HepG2 (cell line): ENCODE measurements at regions of chr7 and their contacts with region 1.

Region 1: DNA sequence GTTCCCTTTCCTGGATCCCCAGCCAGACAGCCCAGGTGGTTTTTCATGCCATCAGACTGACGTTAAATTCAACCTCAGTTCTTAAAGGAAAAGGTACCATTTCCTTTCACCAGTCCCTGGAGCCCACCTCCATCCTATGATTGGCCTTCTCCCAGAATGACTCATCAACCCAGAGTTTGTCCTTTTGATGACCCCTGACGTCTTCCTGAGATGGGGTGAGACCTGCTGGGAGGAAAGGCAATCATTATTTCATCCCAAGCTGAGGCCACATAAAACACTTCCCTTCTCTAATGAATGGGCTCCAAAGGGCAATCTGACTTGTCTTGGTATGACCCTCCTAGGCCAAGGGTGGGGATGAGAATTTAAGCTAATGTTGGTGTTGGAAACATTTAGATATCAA is 750.7 kb downstream of the SUGCT start:
- DNase-seq: no peak
- ATAC-seq: no peak
- H3K4me3 ChIP-seq: no peak overlapping the region
- H3K27ac ChIP-seq: no peak overlapping the region
- H3K4me1 ChIP-seq: no peaks in the 10 kb centered on the region
- H3K27me3 ChIP-seq: no peaks in the 10 kb centered on the region
- CTCF ChIP-seq: no peak
- EP300 ChIP-seq: no peak
- POLR2A ChIP-seq: no peak
- RAD21 ChIP-seq: no peak

Region 2: DNA sequence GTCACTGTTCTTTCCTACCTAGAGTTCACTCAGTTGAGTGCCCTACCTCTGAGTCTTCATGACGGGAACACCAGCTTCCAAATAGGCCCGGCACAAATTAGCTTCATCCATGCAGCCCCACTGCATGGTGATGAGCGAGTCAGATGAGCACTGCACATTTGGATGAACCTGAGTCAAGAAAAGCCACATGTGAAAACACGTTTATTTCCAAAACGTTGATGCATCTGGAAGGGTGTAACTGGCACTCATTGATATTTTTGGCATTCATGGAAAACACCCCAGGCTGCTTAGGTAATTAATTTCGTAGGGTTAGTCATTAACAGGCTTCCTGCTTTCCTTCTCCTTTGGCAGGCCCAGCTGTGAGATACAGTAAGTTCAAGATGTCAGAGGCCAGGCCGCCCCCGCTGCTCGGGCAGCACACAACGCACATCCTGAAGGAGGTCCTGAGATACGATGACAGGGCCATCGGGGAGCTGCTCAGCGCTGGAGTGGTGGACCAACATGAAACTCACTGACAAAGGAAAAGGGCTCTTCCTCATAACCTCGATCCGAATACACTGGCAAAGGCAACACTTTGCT is 25.4 kb before region 1 on chr7:
- CTCF ChIA-PET with region 1: no interaction called
- POLR2A ChIA-PET with region 1: no interaction called
- in situ Hi-C with region 1: no loop called
- intact Hi-C with region 1: no loop called
- DNase-seq: no peak
- ATAC-seq: no peak
- H3K4me3 ChIP-seq: no peak overlapping the region
- H3K27ac ChIP-seq: no peak overlapping the region
- H3K4me1 ChIP-seq: 0 out of 2 replicates have a peak, but pooled peaks cover 11% of the 10 kb centered on the region
- H3K27me3 ChIP-seq: no peaks in the 10 kb centered on the region
- CTCF ChIP-seq: no peak
- EP300 ChIP-seq: no peak
- POLR2A ChIP-seq: no peak
- RAD21 ChIP-seq: no peak

Region 3: GRCh38 chr7:40909346-40910005 is 24.0 kb after region 1 on chr7:
- CTCF ChIA-PET with region 1: no interaction called
- POLR2A ChIA-PET with region 1: no interaction called
- in situ Hi-C with region 1: no loop called
- intact Hi-C with region 1: loop called (anchors 1 kb)
- DNase-seq: no peak
- ATAC-seq: no peak
- H3K4me3 ChIP-seq: no peak overlapping the region
- H3K27ac ChIP-seq: no peak overlapping the region
- H3K4me1 ChIP-seq: no peaks in the 10 kb centered on the region
- H3K27me3 ChIP-seq: no peaks in the 10 kb centered on the region
- CTCF ChIP-seq: no peak
- EP300 ChIP-seq: no peak
- POLR2A ChIP-seq: no peak
- RAD21 ChIP-seq: no peak

Region 4: GRCh38 chr7:41881331-41882130 is 996.0 kb after region 1 on chr7:
- CTCF ChIA-PET with region 1: no interaction called
- POLR2A ChIA-PET with region 1: no interaction called
- in situ Hi-C with region 1: no loop called
- intact Hi-C with region 1: loop called (anchors 10 kb)
- DNase-seq: no peak
- ATAC-seq: no peak
- H3K4me3 ChIP-seq: no peak overlapping the region
- H3K27ac ChIP-seq: no peak overlapping the region
- H3K4me1 ChIP-seq: no peaks in the 10 kb centered on the region
- H3K27me3 ChIP-seq: no peaks in the 10 kb centered on the region
- CTCF ChIP-seq: no peak
- EP300 ChIP-seq: no peak
- POLR2A ChIP-seq: no peak
- RAD21 ChIP-seq: no peak